ENCODE measurements at regions of chr9 and their contacts with region 1.

Region 1: GRCh38 chr9:136283291-136284235 is 20.3 kb downstream of the CCDC187 start:
- DNase-seq: peak; percentile 67 to 84 (median 76)
- H3K4me3 ChIP-seq: no peak overlapping the region
- H3K27ac ChIP-seq: no peak overlapping the region
- H3K4me1 ChIP-seq: no peaks in the 10 kb centered on the region
- H3K27me3 ChIP-seq: no peaks in the 10 kb centered on the region
- CTCF ChIP-seq: peak; percentile 63 to 75 (median 68)
- EP300 ChIP-seq: no peak
- POLR2A ChIP-seq: no peak

Region 2: GRCh38 chr9:135797507-135798262 is 485.9 kb before region 1 on chr9:
- intact Hi-C with region 1: loop called in 1 of 4 experiments (anchors 10 kb)
- DNase-seq: peak in 1 of 5 donors; percentile 59
- H3K4me3 ChIP-seq: no peak overlapping the region
- H3K27ac ChIP-seq: no peak overlapping the region
- H3K4me1 ChIP-seq: no peaks in the 10 kb centered on the region
- H3K27me3 ChIP-seq: no peaks in the 10 kb centered on the region
- CTCF ChIP-seq: no peak
- EP300 ChIP-seq: no peak
- POLR2A ChIP-seq: no peak

Region 3: GRCh38 chr9:136138566-136138965 is 145.0 kb before region 1 on chr9:
- intact Hi-C with region 1: loop called in 2 of 4 experiments (anchors 5 kb)
- DNase-seq: no peak
- H3K4me3 ChIP-seq: no peak overlapping the region
- H3K27ac ChIP-seq: no peak overlapping the region
- H3K4me1 ChIP-seq: no peaks in the 10 kb centered on the region
- H3K27me3 ChIP-seq: no peaks in the 10 kb centered on the region
- CTCF ChIP-seq: no peak
- EP300 ChIP-seq: no peak
- POLR2A ChIP-seq: no peak

Region 4: DNA sequence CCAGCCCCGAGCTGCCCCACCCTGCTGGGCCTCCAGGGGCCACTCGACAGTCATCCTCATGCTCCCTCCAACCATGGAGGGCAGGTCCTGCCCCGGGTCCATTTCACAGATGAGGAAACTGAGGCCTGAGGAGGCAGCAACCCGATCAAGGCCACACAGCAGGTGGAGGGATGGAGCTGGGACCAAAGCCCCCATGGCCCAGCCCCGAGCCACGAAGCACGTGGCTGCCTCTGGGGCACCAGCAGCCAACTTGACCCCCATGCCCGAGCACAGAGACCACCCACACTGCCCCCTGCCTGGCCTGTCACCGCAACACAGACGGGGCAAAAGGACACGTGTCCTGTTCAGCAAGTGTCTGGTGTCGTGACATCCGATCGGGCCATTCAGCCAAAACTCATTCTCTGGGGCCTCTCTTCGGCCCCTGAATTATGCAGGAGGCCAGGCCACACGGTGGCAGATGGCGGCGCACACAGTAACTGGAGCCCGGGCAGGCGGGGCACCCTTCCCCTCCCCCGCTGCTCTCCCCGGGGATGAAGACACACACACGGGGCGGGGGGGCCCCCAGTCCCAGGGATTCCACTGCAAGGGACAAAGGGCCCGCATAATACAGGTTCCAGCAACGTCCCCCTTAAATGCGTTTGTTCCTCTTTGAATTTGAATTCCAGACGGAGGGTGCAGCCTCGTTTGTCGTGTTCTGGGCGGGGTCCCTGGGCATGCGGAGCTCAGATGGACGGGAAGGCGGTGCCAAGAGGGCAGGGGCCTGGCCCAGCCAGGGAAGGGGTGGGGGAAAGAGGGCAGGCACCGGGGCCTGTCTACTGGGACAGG is 135.5 kb before region 1 on chr9:
- intact Hi-C with region 1: loop called in 2 of 4 experiments (anchors 5 kb)
- DNase-seq: no peak
- H3K4me3 ChIP-seq: no peak overlapping the region
- H3K27ac ChIP-seq: no peak overlapping the region
- H3K4me1 ChIP-seq: no peaks in the 10 kb centered on the region
- H3K27me3 ChIP-seq: no peaks in the 10 kb centered on the region
- CTCF ChIP-seq: no peak
- EP300 ChIP-seq: no peak
- POLR2A ChIP-seq: no peak

Region 5: DNA sequence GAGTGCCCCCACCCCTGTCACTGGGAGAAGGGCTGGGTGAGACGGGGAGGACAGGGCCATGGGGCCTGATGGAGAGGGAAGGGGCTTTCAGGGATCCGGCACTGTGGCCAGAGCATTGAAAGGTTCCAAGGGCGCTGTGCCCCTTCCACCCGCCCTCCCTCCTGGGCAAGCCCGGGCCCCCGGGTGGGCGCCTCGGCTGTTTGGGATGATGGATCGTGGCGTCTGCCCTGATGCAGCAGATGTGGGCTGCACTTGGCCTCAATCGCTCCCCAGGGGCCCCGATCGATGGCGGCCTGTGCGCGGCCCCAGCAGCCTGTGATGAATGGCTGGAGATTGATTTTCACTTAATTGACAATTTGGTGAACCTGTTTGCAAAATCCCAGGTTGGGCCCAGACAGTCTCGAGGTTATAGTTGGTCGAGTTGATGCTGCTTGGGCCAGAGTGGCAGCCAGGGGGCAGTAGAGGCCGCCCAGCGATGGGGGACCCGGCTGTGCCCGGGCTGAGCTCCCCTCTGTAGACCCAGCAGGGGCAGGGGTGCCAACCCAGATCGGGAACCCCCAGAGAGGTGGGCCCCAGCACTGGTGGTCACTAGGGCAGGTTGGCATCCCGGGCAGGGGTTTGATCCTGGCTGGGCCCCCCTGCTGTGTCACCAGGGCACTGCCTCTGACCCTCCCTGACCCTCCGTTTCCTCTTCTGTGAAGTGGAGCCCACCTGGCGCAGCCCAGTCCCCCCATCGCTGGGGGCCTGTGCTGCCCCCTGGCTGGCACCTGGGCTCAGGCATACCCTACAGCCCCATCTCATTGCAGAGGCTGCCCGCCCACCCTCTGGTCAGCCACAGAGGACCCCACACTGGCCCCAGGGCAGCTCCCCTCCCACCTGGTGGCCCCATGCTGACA is 113.3 kb before region 1 on chr9:
- intact Hi-C with region 1: loop called in 1 of 4 experiments (anchors 10 kb)
- DNase-seq: peak in 3 of 5 donors; percentile 23 to 61 (median 35)
- H3K4me3 ChIP-seq: no peak overlapping the region
- H3K27ac ChIP-seq: no peak overlapping the region
- H3K4me1 ChIP-seq: no peaks in the 10 kb centered on the region
- H3K27me3 ChIP-seq: no peaks in the 10 kb centered on the region
- CTCF ChIP-seq: peak in 1 of 3 donors; percentile 50
- EP300 ChIP-seq: no peak
- POLR2A ChIP-seq: no peak

Measured in ovary (tissue), 10 donors.